Panc1 (cell line): ENCODE measurements at regions of chr18 and their contacts with region 1.

Region 1: GRCh38 chr18:8696749-8697211 is 8.6 kb upstream of the MTCL1 start:
- DNase-seq: no peak
- ATAC-seq: peak; percentile 96
- H3K4me3 ChIP-seq: no peak overlapping the region
- H3K27ac ChIP-seq: no peak overlapping the region
- H3K4me1 ChIP-seq: no peaks in the 10 kb centered on the region
- H3K27me3 ChIP-seq: no peaks in the 10 kb centered on the region
- CTCF ChIP-seq: peak; percentile 95

Region 2: DNA sequence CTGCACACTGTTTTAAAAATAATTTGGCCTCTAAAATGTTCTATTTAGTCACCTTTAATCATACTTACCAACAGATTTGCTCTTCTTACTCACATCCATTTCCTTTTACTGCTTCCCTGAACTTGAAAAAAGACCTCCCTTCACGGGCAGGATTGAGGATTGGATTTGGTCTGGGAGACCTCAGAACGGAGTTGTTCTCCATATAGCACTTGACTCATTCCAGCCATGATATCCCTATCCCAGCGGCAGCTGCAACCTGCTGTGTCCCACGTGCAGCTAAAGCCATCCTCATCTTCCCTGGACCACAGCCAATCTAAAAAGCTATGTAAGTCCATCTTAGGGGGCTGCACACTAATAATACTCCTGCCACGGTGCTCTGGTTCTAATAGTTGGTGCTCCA is 1226.7 kb before region 1 on chr18:
- CTCF ChIA-PET with region 1: no interaction called
- POLR2A ChIA-PET with region 1: no interaction called
- in situ Hi-C with region 1: no loop called
- intact Hi-C with region 1: no loop called
- DNase-seq: no peak
- ATAC-seq: no peak
- H3K4me3 ChIP-seq: no peak overlapping the region
- H3K27ac ChIP-seq: no peak overlapping the region
- H3K4me1 ChIP-seq: no peaks in the 10 kb centered on the region
- H3K27me3 ChIP-seq: no peaks in the 10 kb centered on the region
- CTCF ChIP-seq: no peak

Region 3: DNA sequence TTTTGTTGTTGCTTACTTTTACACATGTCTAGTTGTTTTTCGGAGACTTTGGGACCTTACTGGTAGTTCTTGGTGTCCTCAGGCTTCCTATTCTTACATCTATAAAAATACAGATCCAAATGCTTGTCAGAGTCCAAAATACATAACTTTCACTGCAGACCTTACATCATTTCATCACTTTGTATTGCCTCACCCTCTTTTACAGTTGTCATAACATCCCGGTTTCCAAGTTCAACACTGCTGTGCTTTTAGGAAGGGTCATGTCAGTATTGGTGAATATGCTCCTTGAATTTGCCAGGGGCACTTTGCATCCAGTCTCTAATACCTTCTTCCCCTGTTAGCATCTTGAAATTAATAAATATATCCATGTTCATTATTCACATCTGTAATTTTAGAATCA is 605.7 kb before region 1 on chr18:
- CTCF ChIA-PET with region 1: no interaction called
- POLR2A ChIA-PET with region 1: no interaction called
- in situ Hi-C with region 1: no loop called
- intact Hi-C with region 1: no loop called
- DNase-seq: no peak
- ATAC-seq: no peak
- H3K4me3 ChIP-seq: no peak overlapping the region
- H3K27ac ChIP-seq: no peak overlapping the region
- H3K4me1 ChIP-seq: no peaks in the 10 kb centered on the region
- H3K27me3 ChIP-seq: no peaks in the 10 kb centered on the region
- CTCF ChIP-seq: no peak

Region 4: DNA sequence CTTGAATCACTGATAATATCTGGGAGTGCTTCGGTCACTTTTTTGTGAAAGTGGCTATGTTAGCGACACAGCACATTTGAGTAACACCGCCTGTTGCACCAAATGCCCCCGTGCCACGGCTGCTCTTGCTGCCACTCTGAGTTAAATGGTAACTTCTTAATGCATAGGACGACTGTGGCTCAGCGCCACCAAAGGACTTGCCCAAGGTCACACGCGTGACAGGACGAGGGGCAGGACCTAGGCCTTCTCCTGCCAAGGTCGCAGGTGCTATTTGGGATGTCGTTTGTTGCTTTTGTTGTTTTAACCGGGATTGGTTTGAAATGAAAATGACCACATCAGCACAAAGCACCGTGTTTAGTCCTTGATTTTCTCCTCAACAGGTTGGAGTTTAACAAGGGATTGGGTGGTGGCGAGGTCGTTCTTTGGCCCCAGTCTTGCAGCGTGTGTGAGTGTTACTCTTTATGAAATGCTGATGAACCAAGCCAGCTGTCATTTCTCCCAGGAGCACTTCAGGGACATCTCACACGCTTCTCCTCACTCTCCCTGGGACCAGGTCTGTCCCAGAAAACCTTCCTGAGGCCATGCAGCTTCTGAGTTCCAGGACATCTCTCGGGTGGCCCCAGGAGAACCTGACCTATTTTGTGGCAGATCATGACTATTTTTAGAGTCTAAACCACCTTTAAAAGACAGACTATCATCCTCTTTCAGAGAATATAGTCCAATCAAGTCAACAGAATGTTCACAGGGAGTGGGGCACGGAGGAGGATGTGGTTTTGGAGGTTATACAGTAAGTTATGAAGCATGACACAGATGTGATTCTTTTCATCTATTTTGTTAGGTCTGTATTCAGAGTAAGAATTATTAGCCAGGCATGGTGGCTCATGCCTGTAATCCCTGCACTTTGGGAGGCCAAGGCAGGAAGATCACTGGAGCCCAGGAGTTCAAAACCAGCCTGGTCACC is 58.5 kb after region 1 on chr18:
- CTCF ChIA-PET with region 1: no interaction called
- POLR2A ChIA-PET with region 1: no interaction called
- in situ Hi-C with region 1: no loop called
- intact Hi-C with region 1: loop called (anchors 10 kb)
- DNase-seq: no peak
- ATAC-seq: no peak
- H3K4me3 ChIP-seq: no peak overlapping the region
- H3K27ac ChIP-seq: no peak overlapping the region
- H3K4me1 ChIP-seq: no peaks in the 10 kb centered on the region
- H3K27me3 ChIP-seq: no peaks in the 10 kb centered on the region
- CTCF ChIP-seq: no peak

Region 5: DNA sequence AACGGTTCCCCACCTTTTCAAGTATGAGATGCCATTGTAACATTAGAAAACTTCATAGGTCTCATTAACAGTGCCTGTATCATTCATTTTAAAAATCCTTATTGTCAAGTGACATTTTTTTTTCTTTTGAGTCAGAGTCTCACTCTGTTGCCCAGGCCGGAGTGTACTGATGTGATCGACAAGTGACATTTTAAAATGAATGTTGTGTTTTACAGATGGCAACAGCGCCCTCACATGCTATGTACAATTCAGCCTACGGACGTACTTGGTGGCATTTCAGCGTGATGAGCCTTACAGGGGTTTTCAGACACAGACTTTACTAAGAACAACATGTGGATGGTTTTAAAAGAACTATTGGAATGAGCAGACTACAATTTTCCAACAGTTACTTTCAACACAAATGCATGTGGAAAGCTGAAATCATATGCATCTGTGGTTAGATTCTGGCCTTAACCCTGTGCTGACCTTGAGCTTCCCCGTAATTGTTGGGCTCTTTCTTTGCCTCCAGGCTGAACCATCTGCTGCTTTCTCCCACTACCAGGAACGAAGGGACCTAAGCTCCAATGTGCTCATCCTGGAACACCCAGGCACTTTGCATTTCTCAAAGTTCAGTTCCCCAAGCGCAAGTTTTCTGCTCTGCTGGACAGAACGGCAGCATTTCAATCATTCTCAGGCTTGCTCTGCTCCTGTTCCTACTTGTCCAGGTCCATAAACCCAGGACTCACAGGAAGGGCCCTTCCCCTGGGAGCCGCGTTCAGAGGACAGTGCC is 285.8 kb after region 1 on chr18:
- CTCF ChIA-PET with region 1: interaction called, 7 read pairs
- POLR2A ChIA-PET with region 1: no interaction called
- in situ Hi-C with region 1: no loop called
- intact Hi-C with region 1: loop called (anchors 5 kb)
- DNase-seq: peak; percentile 51
- ATAC-seq: peak; percentile 93
- H3K4me3 ChIP-seq: no peak overlapping the region
- H3K27ac ChIP-seq: 0 out of 2 replicates have a peak overlapping the region, but pooled peaks have one; percentile 7
- H3K4me1 ChIP-seq: peaks cover 4% of the 10 kb centered on the region
- H3K27me3 ChIP-seq: no peaks in the 10 kb centered on the region
- CTCF ChIP-seq: peak; percentile 80